Esophagus squamous epithelium (tissue), 5 donors: ENCODE measurements at regions of chr11 and their contacts with region 1.

Region 1: GRCh38 chr11:113305440-113306336 is 8.7 kb upstream of the TTC12 start:
- DNase-seq: no peak
- H3K4me3 ChIP-seq: no peak overlapping the region
- H3K27ac ChIP-seq: no peak overlapping the region
- H3K4me1 ChIP-seq: peaks cover 0 to 5% (median 0%) of the 10 kb centered on the region in 3 donors
- H3K27me3 ChIP-seq: peaks cover 0 to 11% (median 0%) of the 10 kb centered on the region in 4 donors
- CTCF ChIP-seq: peak; percentile 86 to 96 (median 92)
- POLR2A ChIP-seq: no peak

Region 2: DNA sequence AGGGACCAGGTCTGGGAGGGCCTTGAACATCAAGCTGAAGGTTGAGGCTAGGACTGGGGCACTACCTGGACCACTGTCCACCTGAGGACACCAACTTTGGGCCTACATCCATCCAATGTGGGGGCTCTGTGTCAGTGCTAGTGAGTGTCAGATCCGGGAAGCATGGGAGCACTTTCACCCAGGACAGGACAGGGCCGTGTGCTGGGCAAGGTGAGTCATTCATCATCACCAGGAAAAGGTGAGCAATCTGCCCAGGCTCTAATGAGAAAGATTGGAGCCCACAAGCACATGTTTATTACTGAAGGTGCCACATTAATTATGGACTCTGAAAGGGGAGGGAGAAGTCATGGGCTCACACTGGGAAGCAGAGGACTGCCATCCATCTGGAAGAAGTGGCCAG is 209.2 kb after region 1 on chr11:
- intact Hi-C with region 1: no loop called
- DNase-seq: no peak
- H3K4me3 ChIP-seq: no peak overlapping the region
- H3K27ac ChIP-seq: no peak overlapping the region
- H3K4me1 ChIP-seq: no peaks in the 10 kb centered on the region
- H3K27me3 ChIP-seq: peaks cover 0 to 17% (median 0%) of the 10 kb centered on the region in 4 donors
- CTCF ChIP-seq: no peak
- POLR2A ChIP-seq: no peak

Region 3: DNA sequence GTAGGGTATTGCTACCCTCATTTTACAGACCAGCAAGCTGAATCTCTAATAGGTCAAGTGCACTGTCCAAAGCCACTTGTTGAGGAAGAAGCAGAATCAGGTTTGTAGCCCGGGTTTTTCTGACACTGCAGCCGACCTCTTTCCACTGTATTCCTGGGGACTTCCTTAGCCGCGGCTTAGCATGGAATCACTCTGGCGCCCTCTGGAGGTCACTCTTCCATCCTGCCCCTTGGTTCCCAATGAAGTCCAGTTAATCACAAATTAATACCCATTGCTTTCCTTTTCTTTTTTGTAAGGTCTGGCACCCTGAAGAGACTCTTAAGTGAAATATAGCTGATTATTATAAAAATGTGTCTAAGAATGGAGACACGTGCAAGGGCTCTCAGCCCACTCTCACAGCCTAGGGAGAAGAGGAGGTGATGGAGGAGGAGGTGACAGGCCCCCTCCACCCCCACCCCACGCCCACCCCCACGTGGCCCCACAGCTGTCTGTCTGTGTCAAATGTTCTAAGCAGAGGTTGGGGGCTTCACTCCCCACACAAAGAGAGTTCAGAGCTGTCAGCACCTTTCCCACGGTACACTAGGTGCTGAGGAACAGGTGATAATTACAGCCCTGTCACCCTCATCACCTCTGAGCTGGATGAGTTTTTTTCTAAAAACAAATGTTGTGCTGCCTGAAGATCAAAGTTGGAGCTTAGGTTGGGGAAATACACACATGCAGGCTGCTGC is 227.2 kb after region 1 on chr11:
- intact Hi-C with region 1: loop called (anchors 5 kb)
- DNase-seq: no peak
- H3K4me3 ChIP-seq: no peak overlapping the region
- H3K27ac ChIP-seq: no peak overlapping the region
- H3K4me1 ChIP-seq: peaks cover 0 to 22% (median 0%) of the 10 kb centered on the region in 3 donors
- H3K27me3 ChIP-seq: peaks cover 0 to 48% (median 0%) of the 10 kb centered on the region in 4 donors
- CTCF ChIP-seq: peak; percentile 73 to 85 (median 77)
- POLR2A ChIP-seq: no peak

Region 4: DNA sequence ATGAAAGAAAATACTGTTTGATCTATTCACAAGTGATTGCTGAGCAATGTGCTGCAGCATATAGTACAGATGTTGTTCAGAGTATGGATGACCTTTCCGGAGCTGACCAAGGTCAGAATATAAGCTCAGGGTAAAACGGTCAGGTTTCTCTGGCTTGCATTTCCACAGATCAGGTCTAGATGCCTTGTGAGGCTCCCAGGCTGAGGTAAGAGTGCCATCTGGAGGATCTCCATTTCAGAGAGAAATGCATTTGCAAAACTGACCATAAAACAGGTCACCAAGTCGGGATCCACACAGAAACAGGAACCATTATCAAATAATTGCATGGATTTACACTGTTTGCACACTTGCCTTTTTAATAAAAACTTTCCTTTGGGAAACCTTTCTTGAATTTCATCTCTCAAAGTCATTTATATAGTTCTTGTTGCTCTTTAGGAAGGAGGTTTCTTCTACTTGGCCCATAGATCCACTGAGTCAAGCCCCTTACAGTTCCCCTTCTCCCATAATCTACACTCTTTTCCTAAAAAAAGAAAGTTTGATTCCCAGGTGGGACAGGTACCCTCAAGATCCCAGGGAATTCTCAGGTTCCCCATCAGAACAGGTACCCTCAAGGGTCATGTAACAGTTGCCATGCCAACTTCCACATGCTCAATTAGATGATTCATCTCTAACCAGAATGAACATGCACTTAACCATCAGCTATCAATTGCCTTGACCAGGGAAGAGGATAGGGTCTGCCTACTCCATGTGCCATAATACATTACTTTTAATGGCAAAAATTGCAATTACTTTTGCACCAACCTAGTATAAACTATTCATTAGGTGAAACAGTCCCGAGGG is 425.4 kb after region 1 on chr11:
- intact Hi-C with region 1: loop called (anchors 5 kb)
- DNase-seq: no peak
- H3K4me3 ChIP-seq: no peak overlapping the region
- H3K27ac ChIP-seq: no peak overlapping the region
- H3K4me1 ChIP-seq: no peaks in the 10 kb centered on the region
- H3K27me3 ChIP-seq: no peaks in the 10 kb centered on the region
- CTCF ChIP-seq: peak in 4 of 6 experiments; percentile 23 to 52 (median 34)
- POLR2A ChIP-seq: no peak